Ascending aorta (tissue), 2 donors: ENCODE measurements at regions of chr18 and their contacts with region 1.

Region 1: DNA sequence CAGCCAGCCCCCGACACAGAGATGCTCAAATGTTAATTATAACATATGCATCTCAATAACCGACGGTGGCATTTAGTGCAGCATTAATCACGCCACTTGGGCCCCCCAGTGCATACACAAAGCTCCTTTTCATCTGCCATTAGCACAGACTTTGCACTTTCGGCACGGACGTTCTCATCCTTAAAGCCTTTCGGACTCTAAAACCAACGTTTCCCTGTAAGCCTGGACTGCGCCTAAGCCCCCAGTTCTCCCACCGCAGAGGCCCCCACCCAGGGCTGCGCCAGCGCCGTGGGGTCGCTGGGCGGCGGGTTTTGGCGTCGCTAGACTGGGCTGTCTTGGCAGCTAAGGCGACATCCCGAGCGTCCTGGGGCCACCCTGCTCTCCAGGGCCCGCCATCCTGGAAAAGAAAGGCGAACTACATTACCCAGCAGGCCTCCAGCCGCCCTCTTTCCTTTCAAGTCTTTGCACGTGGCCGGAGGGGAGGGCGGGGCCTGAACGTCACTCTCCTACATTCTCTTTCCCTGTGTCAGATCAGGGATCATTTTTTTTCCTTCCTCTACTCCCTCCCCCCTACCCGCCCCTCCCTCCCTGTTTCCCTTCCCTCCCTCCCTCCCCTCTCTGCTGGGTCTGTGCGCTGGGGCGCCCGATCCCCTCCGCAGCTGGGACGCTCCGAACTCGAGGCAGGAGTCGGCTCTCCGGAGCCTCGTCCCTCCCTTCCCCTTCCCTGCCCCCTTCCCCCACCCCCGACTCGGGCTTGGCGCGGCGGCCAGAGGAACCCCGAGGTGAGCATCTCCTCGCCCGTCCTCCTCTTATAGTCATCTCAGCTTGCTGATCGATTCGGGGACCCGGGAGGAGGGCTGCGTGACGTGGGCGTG is at the start of gene CTIF:
- DNase-seq: peak; percentile 96 to 99
- H3K4me3 ChIP-seq: peak within 1 kb of the TSS; percentile 82 to 87
- H3K27ac ChIP-seq: peak within 1 kb of the TSS; percentile 94 to 95
- H3K4me1 ChIP-seq: peaks cover 0 to 7% of the 10 kb centered on the region in 2 donors
- H3K27me3 ChIP-seq: no peaks in the 10 kb centered on the region
- CTCF ChIP-seq: no peak
- total RNA-seq, gene CTIF: 55.3 TPM

Region 2: GRCh38 chr18:48410095-48410920 is 128.5 kb before region 1 on chr18:
- intact Hi-C with region 1: loop called (anchors 5 kb)
- DNase-seq: peak; percentile 62 to 95
- H3K4me3 ChIP-seq: peak overlapping the region; percentile 95 to 98
- H3K27ac ChIP-seq: peak overlapping the region; percentile 91 to 92
- H3K4me1 ChIP-seq: peaks cover 4 to 13% of the 10 kb centered on the region in 2 donors
- H3K27me3 ChIP-seq: no peaks in the 10 kb centered on the region
- CTCF ChIP-seq: no peak

Region 3: GRCh38 chr18:48573632-48574283 is 35.0 kb after region 1 on chr18:
- intact Hi-C with region 1: loop called (anchors 5 kb)
- DNase-seq: no peak
- H3K4me3 ChIP-seq: no peak overlapping the region
- H3K27ac ChIP-seq: peak overlapping the region in 1 of 2 donors; percentile 39
- H3K4me1 ChIP-seq: peaks cover 6 to 30% of the 10 kb centered on the region in 2 donors
- H3K27me3 ChIP-seq: no peaks in the 10 kb centered on the region
- CTCF ChIP-seq: no peak

Region 4: DNA sequence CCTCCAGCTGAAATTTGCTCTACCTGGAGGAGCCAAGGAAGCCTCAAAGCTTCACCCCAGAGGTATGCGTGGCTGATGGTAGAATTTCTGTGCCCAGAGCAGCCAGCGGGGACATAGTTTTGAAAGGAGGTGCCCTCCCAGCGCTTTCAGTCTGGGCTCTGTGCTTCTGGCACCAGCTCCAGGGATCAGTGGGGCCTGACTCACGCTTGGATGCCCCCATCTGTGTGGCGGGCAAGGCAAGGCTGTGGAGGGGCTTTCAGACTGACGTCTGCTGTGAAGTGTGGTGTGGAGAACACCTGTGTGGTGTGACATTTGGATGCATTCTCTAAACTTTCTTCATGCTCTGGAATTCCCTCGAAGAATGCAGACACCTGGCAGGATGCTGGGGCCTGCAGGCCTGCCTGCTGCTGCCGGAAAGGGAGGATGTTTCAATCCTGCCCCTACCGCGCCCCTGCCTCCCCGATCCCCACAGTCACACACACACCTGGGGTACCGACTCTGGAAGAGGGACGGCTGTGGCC is 84.2 kb after region 1 on chr18:
- intact Hi-C with region 1: loop called (anchors 2 kb)
- DNase-seq: peak in 1 of 2 donors; percentile 74
- H3K4me3 ChIP-seq: no peak overlapping the region
- H3K27ac ChIP-seq: peak overlapping the region; percentile 73 to 78
- H3K4me1 ChIP-seq: peaks cover 9 to 27% of the 10 kb centered on the region in 2 donors
- H3K27me3 ChIP-seq: no peaks in the 10 kb centered on the region
- CTCF ChIP-seq: no peak

Region 5: GRCh38 chr18:48875942-48876511 is 337.3 kb after region 1 on chr18:
- intact Hi-C with region 1: loop called (anchors 10 kb)
- DNase-seq: no peak
- H3K4me3 ChIP-seq: no peak overlapping the region
- H3K27ac ChIP-seq: no peak overlapping the region
- H3K4me1 ChIP-seq: peaks cover 12 to 36% of the 10 kb centered on the region in 2 donors
- H3K27me3 ChIP-seq: no peaks in the 10 kb centered on the region
- CTCF ChIP-seq: peak in 2 of 3 experiments; percentile 12 to 34